ENCODE measurements at regions of chr1 and their contacts with region 1.

Region 1: DNA sequence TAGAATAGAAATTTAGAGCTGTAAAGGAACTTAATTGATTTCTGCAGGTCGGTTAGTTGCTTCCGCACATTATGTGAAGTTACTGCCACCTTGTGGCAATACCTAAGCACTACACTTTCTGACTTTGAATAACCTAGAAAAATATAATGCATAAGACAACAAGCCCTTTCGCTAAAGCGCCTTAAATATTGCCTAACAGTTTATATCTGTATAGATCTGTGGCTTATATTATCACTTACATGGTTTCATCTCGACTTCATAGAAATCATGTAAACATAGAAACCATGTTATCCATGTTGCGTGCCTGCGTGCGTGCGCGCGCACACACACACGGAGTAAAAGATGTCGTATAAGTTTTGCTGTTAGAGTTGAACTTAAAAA is 10.9 kb upstream of the IFI16 start:
- DNase-seq: peak; percentile 54
- CTCF ChIP-seq: peak; percentile 62

Region 2: DNA sequence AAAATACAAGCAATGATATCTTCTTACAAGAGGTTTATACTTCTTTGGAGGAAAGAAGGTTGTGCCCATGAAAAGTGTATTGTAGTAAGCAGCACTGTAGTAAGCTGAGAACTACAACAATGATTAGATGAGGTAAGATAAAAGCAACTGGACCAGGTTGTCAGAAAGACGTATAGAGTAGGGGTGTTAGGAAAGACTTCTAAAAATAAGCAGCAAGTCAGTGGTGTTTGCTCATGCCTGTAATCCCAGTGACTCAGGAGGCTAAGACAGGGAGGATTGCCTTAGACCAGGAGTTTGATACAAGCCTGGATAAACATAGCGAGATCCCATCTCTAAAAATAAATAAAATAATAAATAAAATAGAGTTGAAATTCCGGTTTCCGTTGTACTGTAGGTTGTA is 414.8 kb before region 1 on chr1:
- in situ Hi-C with region 1: no loop called
- DNase-seq: no peak
- CTCF ChIP-seq: no peak

Region 3: GRCh38 chr1:158809862-158810261 is 188.9 kb before region 1 on chr1:
- in situ Hi-C with region 1: loop called (anchors 10 kb)
- DNase-seq: no peak
- CTCF ChIP-seq: no peak

Region 4: DNA sequence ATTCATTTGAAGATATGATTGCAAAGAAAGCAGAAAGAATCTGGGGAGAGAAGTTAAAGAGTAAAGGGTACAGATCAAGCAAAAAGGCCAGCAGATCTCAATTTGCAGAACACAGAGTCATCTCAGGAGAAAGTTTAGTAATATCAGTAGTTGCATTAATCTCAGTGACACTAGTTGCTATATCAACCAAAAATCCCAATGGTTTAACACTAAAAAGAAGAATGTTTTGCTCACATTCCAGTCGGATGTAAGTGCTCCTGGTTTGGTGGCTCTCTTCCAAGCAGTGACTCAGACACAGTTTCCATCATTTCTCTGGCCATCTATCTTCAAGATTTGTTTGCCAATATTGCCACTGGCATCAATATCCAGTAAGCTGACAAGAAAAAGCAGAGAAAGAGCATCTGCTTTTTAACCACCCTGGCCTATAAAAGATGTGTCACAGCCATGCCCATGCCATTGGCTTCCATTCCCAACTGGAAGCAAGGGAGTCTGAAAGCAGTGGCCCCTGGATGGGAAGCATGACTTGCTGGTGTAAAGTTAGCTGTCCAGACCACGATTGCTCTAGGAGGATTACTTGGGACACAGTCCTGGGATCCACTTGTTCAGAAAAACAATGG is 123.3 kb after region 1 on chr1:
- in situ Hi-C with region 1: no loop called
- DNase-seq: peak; percentile 45
- CTCF ChIP-seq: no peak